ENCODE measurements at regions of chr22 and their contacts with region 1.

Region 1: GRCh38 chr22:25645266-25645665 is 80.8 kb downstream of the GRK3 start:
- DNase-seq: no peak

Region 2: DNA sequence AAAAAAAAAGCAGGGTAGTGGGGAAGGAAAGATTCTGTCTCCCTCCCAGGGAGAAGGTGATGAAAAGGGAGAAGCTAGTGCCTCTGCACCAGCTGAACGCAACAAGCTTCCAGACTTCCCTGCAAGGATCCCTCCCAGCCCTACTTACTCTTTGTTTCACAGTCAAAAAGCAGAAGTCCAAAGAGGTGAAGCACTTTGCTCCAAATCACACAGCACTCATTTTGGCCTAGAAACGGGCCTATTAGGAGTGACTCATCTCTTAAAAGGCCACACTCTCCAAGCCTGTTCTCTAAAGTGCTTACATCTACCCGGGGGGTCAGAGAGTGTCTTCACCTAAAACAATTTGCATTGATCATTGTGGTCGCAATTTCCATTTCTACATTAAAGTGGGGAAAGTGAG is 98.5 kb before region 1 on chr22:
- intact Hi-C with region 1: no loop called
- DNase-seq: no peak

Region 3: DNA sequence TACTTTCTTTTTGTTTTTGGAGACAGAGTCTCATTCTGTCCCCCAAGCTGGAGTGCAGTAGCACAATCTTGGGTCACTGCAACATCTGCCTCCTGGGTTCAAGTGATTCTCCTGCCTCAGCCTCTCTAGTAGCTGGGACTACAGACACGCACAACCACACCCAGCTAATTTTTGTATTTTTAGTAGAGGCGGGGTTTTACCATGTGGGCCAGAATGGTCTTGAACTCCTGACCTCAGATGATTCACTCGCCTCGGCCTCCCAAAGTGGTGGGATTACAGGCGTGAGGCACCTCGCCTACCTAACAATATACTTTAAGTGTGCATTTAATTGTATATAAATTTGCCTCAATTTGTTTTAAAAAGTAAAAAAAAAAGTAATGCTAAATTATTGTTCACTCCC is 42.4 kb before region 1 on chr22:
- intact Hi-C with region 1: no loop called
- DNase-seq: no peak

Region 4: GRCh38 chr22:25623310-25623734 is 21.9 kb before region 1 on chr22:
- intact Hi-C with region 1: loop called in 1 of 2 experiments (anchors 1 kb)
- DNase-seq: no peak